HCT116 (cell line): ENCODE measurements at regions of chr15 and their contacts with region 1.

Region 1: DNA sequence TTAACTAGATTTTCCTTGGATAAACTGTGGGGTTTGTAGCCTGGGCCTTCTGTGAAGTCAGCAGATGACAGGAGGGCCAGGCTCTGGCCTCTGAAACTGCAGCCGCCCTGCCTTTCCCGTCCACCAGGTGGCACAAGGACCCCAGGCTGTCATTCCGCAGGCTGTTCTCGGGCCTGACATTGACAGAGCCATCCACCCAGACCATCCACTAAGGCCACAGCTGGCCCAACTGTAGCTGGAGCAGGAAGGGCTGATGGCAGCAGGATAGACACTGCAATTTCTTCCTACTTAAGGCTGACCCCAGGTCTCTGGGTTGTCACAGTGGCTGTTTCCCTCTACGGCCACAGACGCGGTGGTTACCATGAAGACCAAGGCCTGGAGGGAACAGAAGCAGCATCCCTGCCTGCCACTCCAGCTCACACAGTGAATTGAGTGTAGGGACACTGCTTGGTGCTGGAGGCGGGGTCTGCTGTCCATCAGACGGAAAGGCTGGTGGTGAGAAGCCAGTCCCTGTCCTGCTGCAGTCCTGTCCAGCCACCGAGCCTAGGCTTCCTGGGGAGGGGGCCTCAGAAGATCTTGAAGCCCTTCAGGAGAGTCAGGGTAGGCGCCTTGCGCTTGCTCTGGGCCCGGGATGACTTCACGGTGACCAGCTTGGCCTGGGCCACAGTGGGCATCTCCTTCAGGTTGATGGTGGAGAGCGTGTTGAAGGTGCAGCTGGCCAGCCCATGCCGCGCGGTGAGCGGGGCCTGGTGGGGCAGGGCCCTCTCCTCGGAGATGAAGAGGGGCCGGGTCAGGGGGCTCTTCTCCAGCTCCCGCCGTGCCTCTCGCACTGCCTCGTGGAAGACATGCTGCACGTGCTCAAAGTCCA is 9.4 kb downstream of the SLC51B start:
- DNase-seq: peak; percentile 41
- ATAC-seq: peak; percentile 74
- H3K4me3 ChIP-seq: no peak overlapping the region
- H3K27ac ChIP-seq: no peak overlapping the region
- H3K4me1 ChIP-seq: peaks cover 25 to 42% of the 10 kb centered on the region in 2 experiments
- H3K27me3 ChIP-seq: no peaks in the 10 kb centered on the region
- CTCF ChIP-seq: peak; percentile 89 to 95 (median 90)
- POLR2A ChIP-seq: no peak
- RAD21 ChIP-seq: peak; percentile 93

Region 2: DNA sequence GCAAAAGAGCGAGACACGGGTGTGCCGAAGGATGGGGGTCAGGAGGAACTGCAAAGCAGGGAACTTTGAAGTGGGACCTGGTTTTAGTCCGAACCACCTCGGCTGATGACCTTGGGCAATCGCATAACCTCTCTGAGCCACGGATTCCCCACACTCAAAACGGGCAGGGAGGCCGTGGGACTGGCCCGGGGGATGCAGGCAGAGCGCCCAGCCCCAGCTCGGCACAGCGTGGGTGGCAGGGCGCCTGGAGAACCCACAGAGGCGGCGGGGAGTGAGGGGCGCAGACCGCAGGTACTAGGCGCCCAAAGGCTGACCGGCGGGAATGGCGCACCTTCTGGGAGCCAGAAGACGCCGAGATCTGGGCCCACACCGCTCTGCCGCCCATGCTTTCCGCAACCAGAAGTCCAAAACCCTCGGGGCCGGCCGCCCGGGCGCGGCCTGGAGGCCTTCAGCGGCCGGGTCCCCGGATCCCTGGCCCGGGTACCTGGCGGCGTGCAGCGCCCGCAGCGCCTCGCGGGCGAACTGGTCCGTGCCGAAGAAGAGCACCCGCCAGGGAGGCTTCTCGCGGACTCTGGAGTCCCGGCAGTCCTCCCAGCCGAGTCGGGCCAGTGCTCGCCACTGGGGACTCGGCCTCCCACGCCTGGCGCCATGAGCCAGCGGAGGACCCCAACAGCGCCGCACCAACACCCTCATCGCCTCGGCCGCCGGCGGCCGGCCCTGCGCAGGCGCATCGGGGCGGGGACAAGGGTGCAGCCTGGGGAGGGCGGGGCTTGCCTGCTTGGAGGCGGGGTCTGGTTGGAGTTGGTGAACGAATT is 25.4 kb before region 1 on chr15 and contains the start of gene MTFMT:
- CTCF ChIA-PET with region 1: interaction called, 5 read pairs
- POLR2A ChIA-PET with region 1: no interaction called
- RAD21 ChIA-PET with region 1: no interaction called
- intact Hi-C with region 1: loop called (anchors 2 kb)
- DNase-seq: peak; percentile 53
- ATAC-seq: peak; percentile 82
- H3K4me3 ChIP-seq: peak within 1 kb of the TSS; percentile 92 to 96
- H3K27ac ChIP-seq: peak within 1 kb of the TSS; percentile 72
- H3K4me1 ChIP-seq: peaks cover 7 to 30% of the 10 kb centered on the region in 2 experiments; a peak in 3 of 4 replicates
- H3K27me3 ChIP-seq: no peaks in the 10 kb centered on the region
- CTCF ChIP-seq: no peak
- POLR2A ChIP-seq: peak; percentile 92
- RAD21 ChIP-seq: no peak
- total RNA-seq, gene MTFMT: 30.4 TPM

Region 3: GRCh38 chr15:65077981-65078352 is 23.4 kb after region 1 on chr15:
- CTCF ChIA-PET with region 1: interaction called, 9 read pairs
- POLR2A ChIA-PET with region 1: no interaction called
- RAD21 ChIA-PET with region 1: no interaction called
- intact Hi-C with region 1: loop called (anchors 2 kb)
- DNase-seq: peak; percentile 48
- ATAC-seq: peak; percentile 94
- H3K4me3 ChIP-seq: no peak overlapping the region
- H3K27ac ChIP-seq: no peak overlapping the region
- H3K4me1 ChIP-seq: peaks cover 3 to 13% of the 10 kb centered on the region in 2 experiments; a peak in 2 of 4 replicates
- H3K27me3 ChIP-seq: no peaks in the 10 kb centered on the region; the same call in 1 of the 2 replicates
- CTCF ChIP-seq: peak; percentile 47 to 82 (median 53)
- POLR2A ChIP-seq: no peak
- RAD21 ChIP-seq: peak; percentile 67

Region 4: DNA sequence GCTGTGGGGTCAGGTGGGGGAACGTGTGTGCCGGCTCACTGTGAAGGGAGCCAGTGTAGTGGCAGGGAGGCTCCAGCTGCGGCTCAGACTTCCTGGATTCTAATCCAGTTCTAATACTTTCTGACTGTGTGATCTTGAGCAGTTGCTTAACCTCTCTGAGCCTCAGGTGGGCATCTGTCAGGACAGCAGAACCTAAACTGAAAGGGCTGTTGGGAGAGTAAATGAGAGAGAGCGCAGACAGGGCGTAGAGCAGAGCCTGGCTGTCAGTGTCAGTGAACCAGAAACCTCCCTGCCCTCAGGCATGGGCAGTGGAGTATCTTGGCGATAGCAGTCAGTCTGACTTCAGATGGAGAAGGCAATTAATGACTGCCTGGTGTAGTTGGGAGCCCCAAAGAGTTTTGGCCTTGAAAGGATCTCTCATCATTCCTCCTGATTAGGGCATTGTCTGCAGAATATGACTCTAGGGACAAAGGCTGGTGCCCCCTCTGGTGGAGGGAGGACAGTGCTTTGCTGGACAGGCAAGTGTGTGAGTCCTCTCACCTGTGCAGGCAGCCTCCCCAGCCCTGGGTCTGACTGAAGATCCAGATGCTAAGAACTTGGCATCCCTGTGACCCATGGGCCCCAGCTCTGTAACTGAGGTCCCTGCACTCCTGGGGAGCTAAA is 31.6 kb after region 1 on chr15:
- CTCF ChIA-PET with region 1: interaction called, 7 read pairs
- POLR2A ChIA-PET with region 1: no interaction called
- RAD21 ChIA-PET with region 1: no interaction called
- intact Hi-C with region 1: loop called (anchors 1 kb)
- DNase-seq: peak; percentile 49
- ATAC-seq: peak; percentile 91
- H3K4me3 ChIP-seq: no peak overlapping the region
- H3K27ac ChIP-seq: no peak overlapping the region
- H3K4me1 ChIP-seq: peaks cover 0 to 5% of the 10 kb centered on the region in 2 experiments; a peak in 2 of 4 replicates
- H3K27me3 ChIP-seq: peaks cover 7% of the 10 kb centered on the region; the same call in 1 of the 2 replicates
- CTCF ChIP-seq: peak; percentile 66 to 84 (median 69)
- POLR2A ChIP-seq: no peak
- RAD21 ChIP-seq: peak; percentile 70

Region 5: GRCh38 chr15:65101411-65101890 is 46.9 kb after region 1 on chr15:
- CTCF ChIA-PET with region 1: interaction called, 52 read pairs
- POLR2A ChIA-PET with region 1: no interaction called
- RAD21 ChIA-PET with region 1: no interaction called
- intact Hi-C with region 1: loop called (anchors 1 kb)
- DNase-seq: peak; percentile 22
- ATAC-seq: peak; percentile 87
- H3K4me3 ChIP-seq: no peak overlapping the region
- H3K27ac ChIP-seq: no peak overlapping the region
- H3K4me1 ChIP-seq: no peaks in the 10 kb centered on the region
- H3K27me3 ChIP-seq: no peaks in the 10 kb centered on the region
- CTCF ChIP-seq: peak; percentile 69 to 92 (median 84)
- POLR2A ChIP-seq: no peak
- RAD21 ChIP-seq: peak; percentile 76

Region 6: DNA sequence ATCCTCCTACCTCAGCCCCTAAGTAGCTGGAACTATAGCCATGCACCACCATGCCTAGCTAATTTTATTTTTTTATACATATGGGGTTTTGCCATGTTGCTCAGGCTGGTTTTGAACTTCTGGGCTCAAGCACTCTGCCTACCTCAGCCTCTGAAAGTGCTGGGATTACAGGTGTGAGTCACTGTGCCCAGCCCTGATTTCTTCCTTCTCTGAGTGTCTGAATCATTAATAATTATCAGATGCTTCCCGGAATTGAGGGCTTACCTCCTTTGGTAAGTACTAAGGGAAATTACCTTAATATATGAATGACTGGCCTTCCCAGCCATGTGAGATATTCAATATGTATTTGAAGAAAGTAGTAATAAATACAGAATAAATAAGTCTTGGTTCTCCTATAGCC is 123.3 kb after region 1 on chr15:
- CTCF ChIA-PET with region 1: no interaction called
- POLR2A ChIA-PET with region 1: no interaction called
- RAD21 ChIA-PET with region 1: no interaction called
- intact Hi-C with region 1: loop called (anchors 5 kb)
- DNase-seq: no peak
- ATAC-seq: no peak
- H3K4me3 ChIP-seq: no peak overlapping the region
- H3K27ac ChIP-seq: no peak overlapping the region
- H3K4me1 ChIP-seq: peaks cover 0 to 8% of the 10 kb centered on the region in 2 experiments; a peak in 1 of 4 replicates
- H3K27me3 ChIP-seq: no peaks in the 10 kb centered on the region
- CTCF ChIP-seq: no peak
- POLR2A ChIP-seq: no peak
- RAD21 ChIP-seq: no peak

Region 7: GRCh38 chr15:65384895-65385858 is 330.6 kb after region 1 on chr15:
- CTCF ChIA-PET with region 1: no interaction called
- POLR2A ChIA-PET with region 1: no interaction called
- RAD21 ChIA-PET with region 1: no interaction called
- intact Hi-C with region 1: loop called (anchors 5 kb)
- DNase-seq: peak; percentile 74
- ATAC-seq: peak; percentile 87
- H3K4me3 ChIP-seq: peak overlapping the region; percentile 39 to 59
- H3K27ac ChIP-seq: peak overlapping the region; percentile 70
- H3K4me1 ChIP-seq: peaks cover 8 to 21% of the 10 kb centered on the region in 2 experiments
- H3K27me3 ChIP-seq: no peaks in the 10 kb centered on the region; the same call in 1 of the 2 replicates
- CTCF ChIP-seq: peak; percentile 88 to 97 (median 93)
- POLR2A ChIP-seq: no peak
- RAD21 ChIP-seq: peak; percentile 93